K562 (cell line): ENCODE measurements at regions of chr12 and their contacts with region 1.

Region 1: GRCh38 chr12:49866859-49867579 is 24.1 kb upstream of the BCDIN3D start:
- DNase-seq: peak; percentile 83 to 86 (median 84)
- ATAC-seq: peak; percentile 76
- H3K4me3 ChIP-seq: no peak overlapping the region
- H3K27ac ChIP-seq: no peak overlapping the region
- H3K4me1 ChIP-seq: peaks cover 35 to 40% of the 10 kb centered on the region in 2 experiments
- H3K27me3 ChIP-seq: peaks cover 4 to 19% of the 10 kb centered on the region in 2 experiments; a peak in 2 of 5 replicates
- CTCF ChIP-seq: peak; percentile 89 to 95 (median 94)
- EP300 ChIP-seq: no peak
- POLR2A ChIP-seq: no peak
- RAD21 ChIP-seq: peak; percentile 86 to 87

Region 2: GRCh38 chr12:49909826-49910225 is 42.8 kb after region 1 on chr12:
- CTCF ChIA-PET with region 1: no interaction called
- POLR2A ChIA-PET with region 1: interaction called, 4 read pairs
- in situ Hi-C with region 1: no loop called
- intact Hi-C with region 1: loop called (anchors 5 kb)
- DNase-seq: peak; percentile 54 to 73 (median 58)
- ATAC-seq: peak; percentile 65
- H3K4me3 ChIP-seq: no peak overlapping the region
- H3K27ac ChIP-seq: no peak overlapping the region
- H3K4me1 ChIP-seq: peaks cover 14 to 24% of the 10 kb centered on the region in 2 experiments; a peak in 4 of 5 replicates
- H3K27me3 ChIP-seq: no peaks in the 10 kb centered on the region; a peak in 2 of 5 replicates
- CTCF ChIP-seq: no peak
- EP300 ChIP-seq: no peak
- POLR2A ChIP-seq: no peak
- RAD21 ChIP-seq: no peak

Region 3: DNA sequence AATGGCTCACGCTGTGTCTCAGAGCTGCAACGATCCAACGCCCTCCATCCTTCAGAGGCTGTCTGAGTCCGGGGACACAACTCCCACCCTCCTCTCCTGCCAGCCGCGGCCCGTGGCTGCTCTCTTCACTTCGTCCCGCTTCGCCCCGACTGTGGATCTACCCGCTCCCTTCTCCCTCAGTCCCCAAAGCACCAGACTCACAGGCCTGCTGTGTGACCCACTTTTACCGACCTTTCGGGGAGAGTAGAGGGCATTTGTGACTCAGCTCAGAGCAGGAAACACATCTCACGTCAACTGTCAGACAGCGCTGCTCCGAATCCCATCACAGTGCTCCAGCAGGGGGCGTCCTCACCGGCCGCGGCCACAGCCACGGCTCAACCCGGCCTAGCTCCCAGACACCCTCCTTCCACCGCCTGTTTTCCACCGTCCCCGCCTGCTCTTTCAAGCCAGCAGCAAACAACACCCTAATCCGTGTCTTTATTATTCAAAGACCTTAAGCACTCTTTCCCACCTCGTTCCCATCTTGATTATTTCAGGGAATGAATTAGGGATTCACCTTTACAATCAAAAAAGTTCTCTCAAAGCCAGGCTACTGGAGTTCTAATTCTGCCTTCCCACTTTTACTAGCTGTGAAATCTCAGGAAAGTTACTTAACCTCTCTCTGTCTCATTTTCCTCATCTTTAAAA is 78.5 kb after region 1 on chr12:
- CTCF ChIA-PET with region 1: interaction called, 3 read pairs
- POLR2A ChIA-PET with region 1: interaction called, 3 read pairs
- in situ Hi-C with region 1: no loop called
- intact Hi-C with region 1: loop called (anchors 5 kb)
- DNase-seq: peak; percentile 90 to 92 (median 91)
- ATAC-seq: peak; percentile 99
- H3K4me3 ChIP-seq: no peak overlapping the region
- H3K27ac ChIP-seq: peak overlapping the region; percentile 35; the same call in 1 of the 3 replicates
- H3K4me1 ChIP-seq: peaks cover 14 to 20% of the 10 kb centered on the region in 2 experiments; a peak in 4 of 5 replicates
- H3K27me3 ChIP-seq: no peaks in the 10 kb centered on the region
- CTCF ChIP-seq: peak; percentile 87 to 95 (median 90)
- EP300 ChIP-seq: peak; percentile 54; the same call in 1 of the 2 replicates
- POLR2A ChIP-seq: 0 out of 2 replicates have a peak, but pooled peaks have one; percentile 19
- RAD21 ChIP-seq: peak; percentile 42 to 61

Region 4: DNA sequence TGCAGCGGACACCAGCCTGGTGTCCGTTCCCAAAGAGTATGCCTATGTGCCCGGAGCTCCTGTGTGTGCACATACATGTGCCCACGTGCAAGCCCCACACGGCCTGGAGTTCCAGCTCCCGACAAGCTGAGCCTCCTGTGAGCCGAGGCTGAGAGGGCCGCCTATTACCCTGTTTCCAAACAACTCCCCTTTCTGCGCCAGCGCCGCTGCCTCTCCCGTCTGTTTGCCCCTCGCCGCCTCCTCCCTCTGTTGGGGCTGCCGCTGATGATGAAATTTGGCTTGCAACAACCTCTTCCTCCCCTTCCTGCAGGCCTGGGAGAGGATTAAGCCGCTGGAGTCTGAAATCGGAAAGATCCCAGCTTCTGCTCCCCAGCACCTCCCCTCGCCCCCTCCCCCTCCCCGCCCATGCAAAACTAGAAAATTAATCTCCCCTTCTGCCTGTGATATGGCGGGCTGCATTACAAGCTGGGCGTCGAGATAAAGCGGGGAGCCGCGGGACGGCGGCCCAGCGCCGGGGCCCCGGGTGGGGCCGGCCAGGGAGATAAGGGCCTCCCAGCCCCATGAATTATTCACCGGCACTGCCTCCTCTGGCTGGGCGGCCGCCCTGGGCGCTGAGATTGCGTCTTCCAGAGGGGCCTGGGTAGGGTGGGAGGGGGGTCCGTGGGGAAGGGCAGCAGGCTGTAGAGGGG is 183.5 kb after region 1 on chr12:
- CTCF ChIA-PET with region 1: interaction called, 3 read pairs
- POLR2A ChIA-PET with region 1: no interaction called
- in situ Hi-C with region 1: no loop called
- intact Hi-C with region 1: loop called (anchors 5 kb)
- DNase-seq: peak; percentile 96 to 99 (median 99)
- ATAC-seq: peak; percentile 93
- H3K4me3 ChIP-seq: peak overlapping the region; percentile 14; the same call in 1 of the 2 replicates
- H3K27ac ChIP-seq: peak overlapping the region; percentile 42; the same call in 2 of the 3 replicates
- H3K4me1 ChIP-seq: peaks cover 34 to 40% of the 10 kb centered on the region in 2 experiments
- H3K27me3 ChIP-seq: peaks cover 3 to 21% of the 10 kb centered on the region in 2 experiments; a peak in 2 of 5 replicates
- CTCF ChIP-seq: peak in 2 of 3 experiments; percentile 33 to 39; a peak in 4 of 6 replicates
- EP300 ChIP-seq: peak; percentile 96
- POLR2A ChIP-seq: no peak
- RAD21 ChIP-seq: no peak; a peak in 1 of 4 replicates

Region 5: DNA sequence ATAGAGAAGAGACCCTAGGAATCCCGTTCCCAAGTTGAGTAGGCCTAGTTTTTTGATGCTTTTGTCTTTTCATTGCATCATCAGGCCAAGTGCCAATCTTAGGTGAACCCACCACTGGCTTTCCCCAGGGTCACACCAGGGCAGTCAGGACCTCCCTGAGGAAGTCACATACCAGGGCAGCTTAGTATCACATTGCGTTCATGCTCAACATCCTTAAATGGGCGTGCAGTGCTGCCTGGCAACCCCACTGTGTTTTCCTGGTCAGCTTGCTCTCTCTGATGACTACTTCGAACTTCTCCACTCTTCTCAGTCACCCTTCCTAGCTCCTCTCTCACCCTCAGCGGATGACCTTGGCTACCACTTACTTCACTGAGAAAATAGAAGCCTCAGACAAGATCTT is 199.4 kb after region 1 on chr12:
- CTCF ChIA-PET with region 1: interaction called, 7 read pairs
- POLR2A ChIA-PET with region 1: no interaction called
- in situ Hi-C with region 1: loop called (anchors 5 kb)
- intact Hi-C with region 1: no loop called
- DNase-seq: no peak
- ATAC-seq: no peak
- H3K4me3 ChIP-seq: no peak overlapping the region
- H3K27ac ChIP-seq: no peak overlapping the region
- H3K4me1 ChIP-seq: peaks cover 9 to 10% of the 10 kb centered on the region in 2 experiments; a peak in 3 of 5 replicates
- H3K27me3 ChIP-seq: peaks cover 3 to 46% of the 10 kb centered on the region in 2 experiments; a peak in 4 of 5 replicates
- CTCF ChIP-seq: no peak
- EP300 ChIP-seq: no peak
- POLR2A ChIP-seq: no peak
- RAD21 ChIP-seq: no peak

Region 6: GRCh38 chr12:50504798-50505385 is 637.9 kb after region 1 on chr12 and contains the start of gene DIP2B:
- CTCF ChIA-PET with region 1: no interaction called
- POLR2A ChIA-PET with region 1: no interaction called
- in situ Hi-C with region 1: no loop called
- intact Hi-C with region 1: no loop called
- DNase-seq: peak; percentile 92 to 96 (median 95)
- ATAC-seq: peak; percentile 94
- H3K4me3 ChIP-seq: peak within 1 kb of the TSS; percentile 94
- H3K27ac ChIP-seq: peak within 1 kb of the TSS; percentile 86
- H3K4me1 ChIP-seq: peaks cover 22 to 23% of the 10 kb centered on the region in 2 experiments
- H3K27me3 ChIP-seq: no peaks in the 10 kb centered on the region
- CTCF ChIP-seq: peak; percentile 86 to 95 (median 88)
- EP300 ChIP-seq: no peak
- POLR2A ChIP-seq: peak; percentile 78
- RAD21 ChIP-seq: peak; percentile 97
- polyA plus RNA-seq, gene DIP2B: 4.6 to 5.8 TPM